ENCODE measurements at regions of chr10 and their contacts with region 1.

Region 1: GRCh38 chr10:44932517-44933450 is 21.6 kb downstream of the TMEM72 start:
- DNase-seq: peak; percentile 69 to 86 (median 76)
- H3K4me3 ChIP-seq: no peak overlapping the region
- H3K4me3 Mint-ChIP-seq: no peak overlapping the region
- H3K27ac ChIP-seq: no peak overlapping the region
- H3K27ac Mint-ChIP-seq: peak overlapping the region in 1 of 8 donors; percentile 25
- H3K4me1 ChIP-seq: no peaks in the 10 kb centered on the region
- H3K4me1 Mint-ChIP-seq: peaks cover 0 to 4% (median 0%) of the 10 kb centered on the region in 3 donors
- H3K27me3 ChIP-seq: no peaks in the 10 kb centered on the region
- H3K27me3 Mint-ChIP-seq: peaks cover 3 to 4% of the 10 kb centered on the region in 2 donors

Region 2: GRCh38 chr10:44947371-44948152 is 14.8 kb after region 1 on chr10:
- CTCF ChIA-PET with region 1: interaction called, 13 read pairs
- POLR2A ChIA-PET with region 1: no interaction called
- DNase-seq: no peak
- H3K4me3 ChIP-seq: no peak overlapping the region
- H3K4me3 Mint-ChIP-seq: no peak overlapping the region
- H3K27ac ChIP-seq: no peak overlapping the region
- H3K27ac Mint-ChIP-seq: no peak overlapping the region
- H3K4me1 ChIP-seq: no peaks in the 10 kb centered on the region
- H3K4me1 Mint-ChIP-seq: no peaks in the 10 kb centered on the region
- H3K27me3 ChIP-seq: no peaks in the 10 kb centered on the region
- H3K27me3 Mint-ChIP-seq: peaks cover 4 to 15% of the 10 kb centered on the region in 2 donors

Region 3: GRCh38 chr10:44952779-44953231 is 20.0 kb after region 1 on chr10:
- CTCF ChIA-PET with region 1: interaction called, 10 read pairs
- POLR2A ChIA-PET with region 1: no interaction called
- DNase-seq: no peak
- H3K4me3 ChIP-seq: no peak overlapping the region
- H3K4me3 Mint-ChIP-seq: peak overlapping the region in 1 of 7 donors; percentile 18
- H3K27ac ChIP-seq: no peak overlapping the region
- H3K27ac Mint-ChIP-seq: peak overlapping the region in 1 of 8 donors; percentile 17
- H3K4me1 ChIP-seq: no peaks in the 10 kb centered on the region
- H3K4me1 Mint-ChIP-seq: peaks cover 14 to 24% (median 18%) of the 10 kb centered on the region in 3 donors
- H3K27me3 ChIP-seq: no peaks in the 10 kb centered on the region
- H3K27me3 Mint-ChIP-seq: no peaks in the 10 kb centered on the region

Region 4: GRCh38 chr10:44959247-44960087 is 26.7 kb after region 1 on chr10 and contains the start of gene RASSF4:
- CTCF ChIA-PET with region 1: interaction called, 30 read pairs
- POLR2A ChIA-PET with region 1: no interaction called
- DNase-seq: peak; percentile 88 to 92 (median 90)
- H3K4me3 ChIP-seq: peak within 1 kb of the TSS; percentile 82
- H3K4me3 Mint-ChIP-seq: peak within 1 kb of the TSS; percentile 82 to 95 (median 89)
- H3K27ac ChIP-seq: peak within 1 kb of the TSS; percentile 48
- H3K27ac Mint-ChIP-seq: peak within 1 kb of the TSS; percentile 70 to 90 (median 76)
- H3K4me1 ChIP-seq: peaks cover 23% of the 10 kb centered on the region
- H3K4me1 Mint-ChIP-seq: peaks cover 34 to 45% (median 42%) of the 10 kb centered on the region in 3 donors
- H3K27me3 ChIP-seq: no peaks in the 10 kb centered on the region
- H3K27me3 Mint-ChIP-seq: peaks cover 0 to 1% of the 10 kb centered on the region in 2 donors
- total RNA-seq, gene RASSF4: 2.8 TPM

Region 5: DNA sequence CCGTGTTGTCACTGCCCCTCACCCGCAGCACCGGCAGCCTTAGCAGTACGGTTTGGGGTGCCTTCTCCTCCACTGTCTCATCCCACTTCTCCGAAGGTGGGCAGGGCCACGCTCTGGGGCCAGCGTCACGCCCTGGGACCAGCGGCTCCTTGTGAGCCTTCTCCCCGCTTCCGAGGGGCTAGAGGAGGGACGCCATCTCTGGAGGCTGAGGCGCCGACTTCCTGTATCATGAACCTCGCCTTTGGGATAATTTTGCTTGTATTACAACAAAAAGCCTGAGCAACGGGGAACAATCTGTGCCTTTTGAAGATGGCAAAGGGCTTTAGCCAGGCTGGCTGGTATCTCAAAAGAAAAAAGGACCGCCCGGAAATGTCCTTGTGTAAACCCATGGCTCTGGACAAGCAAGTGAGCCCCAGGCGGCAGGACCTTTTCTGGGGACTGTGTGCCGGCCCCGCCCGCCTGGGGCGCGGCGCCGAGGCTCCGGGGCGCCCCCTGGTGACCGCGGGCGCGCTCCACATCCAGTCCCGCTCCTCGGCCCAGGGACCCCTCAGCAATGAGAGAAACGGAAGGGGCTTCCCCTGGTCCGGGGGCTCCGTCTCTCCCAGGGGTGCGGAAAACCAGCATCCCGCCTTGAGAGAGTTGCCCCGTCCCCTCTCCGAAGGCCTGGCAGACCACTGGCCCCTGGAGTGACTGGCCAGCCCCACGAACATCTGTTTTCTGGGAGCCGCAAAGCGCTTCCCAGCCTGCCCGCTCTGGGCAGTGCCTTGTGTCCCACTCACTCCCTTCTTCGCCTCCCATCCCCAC is 42.0 kb after region 1 on chr10:
- CTCF ChIA-PET with region 1: interaction called, 36 read pairs
- POLR2A ChIA-PET with region 1: no interaction called
- DNase-seq: peak; percentile 55 to 72 (median 65)
- H3K4me3 ChIP-seq: peak overlapping the region; percentile 44
- H3K4me3 Mint-ChIP-seq: peak overlapping the region; percentile 50 to 87 (median 72)
- H3K27ac ChIP-seq: no peak overlapping the region
- H3K27ac Mint-ChIP-seq: peak overlapping the region in 5 of 8 donors; percentile 34 to 92 (median 57)
- H3K4me1 ChIP-seq: peaks cover 15% of the 10 kb centered on the region
- H3K4me1 Mint-ChIP-seq: peaks cover 2 to 19% (median 11%) of the 10 kb centered on the region in 3 donors
- H3K27me3 ChIP-seq: no peaks in the 10 kb centered on the region
- H3K27me3 Mint-ChIP-seq: no peaks in the 10 kb centered on the region

Measured in CD8-positive, alpha-beta memory T cell (primary cell).